ENCODE measurements at regions of chr9 and their contacts with region 1.

Region 1: DNA sequence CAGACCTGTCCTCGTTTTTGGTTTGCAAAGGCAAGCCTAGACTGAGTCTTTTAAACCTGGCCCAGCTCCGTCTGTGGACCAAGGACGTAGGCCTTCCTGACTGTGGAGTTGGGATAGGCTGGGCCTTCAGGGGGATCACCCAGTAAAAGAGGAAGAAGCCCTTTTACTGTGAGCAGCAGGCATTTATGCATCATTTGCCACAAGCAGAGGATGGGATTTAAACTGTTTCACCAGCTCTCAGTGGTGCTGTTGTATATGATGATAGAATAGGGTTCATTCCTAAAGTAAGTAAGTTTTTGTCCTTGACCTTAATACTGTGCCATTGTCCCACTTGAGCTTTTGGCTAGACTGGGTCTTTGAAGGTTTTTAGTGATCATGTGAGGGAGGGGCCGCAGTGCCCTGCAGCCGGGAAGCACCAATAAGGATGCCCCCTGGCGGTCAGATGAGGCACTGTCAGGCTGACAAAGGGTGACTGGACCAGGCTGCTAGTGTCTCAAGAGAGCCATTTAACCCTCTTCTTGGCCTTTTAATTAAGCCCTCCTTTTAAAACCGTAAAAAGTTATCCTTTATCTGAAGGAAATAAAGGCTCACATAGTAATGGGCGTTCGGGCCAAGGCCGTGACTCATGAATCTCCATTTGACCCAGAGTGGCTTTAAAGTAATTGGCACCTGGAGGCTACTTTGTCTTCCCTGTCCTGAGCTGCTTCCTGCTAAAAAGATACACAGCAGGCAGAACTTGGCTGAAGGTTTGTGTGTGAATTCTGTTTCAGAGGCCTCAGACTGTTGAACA is 74.0 kb downstream of the UBAP1 start:
- DNase-seq: peak; percentile 79
- ATAC-seq: peak; percentile 85
- H3K4me3 Mint-ChIP-seq: no peak overlapping the region
- H3K27ac Mint-ChIP-seq: no peak overlapping the region
- H3K4me1 Mint-ChIP-seq: peaks cover 12% of the 10 kb centered on the region
- H3K27me3 Mint-ChIP-seq: no peaks in the 10 kb centered on the region
- CTCF ChIP-seq: peak; percentile 95

Region 2: GRCh38 chr9:34065541-34065940 is 187.3 kb before region 1 on chr9:
- CTCF ChIA-PET with region 1: no interaction called
- POLR2A ChIA-PET with region 1: no interaction called
- intact Hi-C with region 1: no loop called
- DNase-seq: no peak
- ATAC-seq: no peak
- H3K4me3 Mint-ChIP-seq: no peak overlapping the region
- H3K27ac Mint-ChIP-seq: no peak overlapping the region
- H3K4me1 Mint-ChIP-seq: no peaks in the 10 kb centered on the region
- H3K27me3 Mint-ChIP-seq: no peaks in the 10 kb centered on the region
- CTCF ChIP-seq: no peak

Region 3: DNA sequence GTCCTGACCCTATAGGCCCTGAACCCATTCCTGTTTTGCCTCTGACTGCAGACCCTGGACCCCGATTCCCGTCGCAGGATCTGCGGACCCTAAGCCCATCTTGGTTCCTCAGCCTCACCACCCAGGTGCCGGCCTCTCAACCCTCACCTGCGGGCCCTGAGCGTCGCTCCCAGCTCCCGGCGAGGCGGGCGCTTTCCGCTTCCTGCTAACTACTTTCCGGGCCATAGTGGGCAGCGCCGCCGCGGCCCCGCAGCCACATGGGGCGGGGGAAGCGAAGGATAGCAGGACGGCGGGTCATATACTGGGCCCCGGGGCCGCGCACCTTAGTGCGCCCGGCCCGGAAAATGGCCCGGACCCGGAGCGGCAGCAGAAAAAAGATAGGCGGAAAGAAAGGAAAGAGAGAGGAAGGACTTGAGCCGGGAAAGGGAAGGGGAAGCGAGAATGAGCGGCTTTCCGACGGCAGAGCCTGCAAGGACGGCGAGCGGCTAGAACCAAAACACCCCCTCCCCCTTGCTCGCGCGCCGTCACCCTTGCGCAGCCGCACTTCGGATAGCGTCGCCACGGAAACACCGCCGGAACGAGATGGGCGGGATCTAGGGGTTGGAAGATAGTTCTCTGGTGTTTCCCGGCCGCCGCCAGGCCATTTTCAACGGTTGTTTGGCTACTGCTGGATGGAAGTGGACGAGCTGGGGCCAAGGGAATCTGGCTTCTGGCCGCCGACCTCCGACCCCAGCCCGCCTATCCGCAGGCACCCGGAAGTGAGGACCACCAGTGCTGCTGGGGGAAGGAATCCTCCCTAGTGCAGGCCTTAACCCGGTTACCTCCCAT is 126.4 kb before region 1 on chr9 and contains the start of gene DCAF12:
- CTCF ChIA-PET with region 1: interaction called, 4 read pairs
- POLR2A ChIA-PET with region 1: no interaction called
- intact Hi-C with region 1: loop called (anchors 10 kb)
- DNase-seq: peak; percentile 92
- ATAC-seq: peak; percentile 95
- H3K4me3 Mint-ChIP-seq: peak within 1 kb of the TSS; percentile 98
- H3K27ac Mint-ChIP-seq: peak within 1 kb of the TSS; percentile 97
- H3K4me1 Mint-ChIP-seq: peaks cover 37% of the 10 kb centered on the region
- H3K27me3 Mint-ChIP-seq: no peaks in the 10 kb centered on the region
- CTCF ChIP-seq: no peak
- total RNA-seq, gene DCAF12: 30.5 to 34.7 TPM

Region 4: DNA sequence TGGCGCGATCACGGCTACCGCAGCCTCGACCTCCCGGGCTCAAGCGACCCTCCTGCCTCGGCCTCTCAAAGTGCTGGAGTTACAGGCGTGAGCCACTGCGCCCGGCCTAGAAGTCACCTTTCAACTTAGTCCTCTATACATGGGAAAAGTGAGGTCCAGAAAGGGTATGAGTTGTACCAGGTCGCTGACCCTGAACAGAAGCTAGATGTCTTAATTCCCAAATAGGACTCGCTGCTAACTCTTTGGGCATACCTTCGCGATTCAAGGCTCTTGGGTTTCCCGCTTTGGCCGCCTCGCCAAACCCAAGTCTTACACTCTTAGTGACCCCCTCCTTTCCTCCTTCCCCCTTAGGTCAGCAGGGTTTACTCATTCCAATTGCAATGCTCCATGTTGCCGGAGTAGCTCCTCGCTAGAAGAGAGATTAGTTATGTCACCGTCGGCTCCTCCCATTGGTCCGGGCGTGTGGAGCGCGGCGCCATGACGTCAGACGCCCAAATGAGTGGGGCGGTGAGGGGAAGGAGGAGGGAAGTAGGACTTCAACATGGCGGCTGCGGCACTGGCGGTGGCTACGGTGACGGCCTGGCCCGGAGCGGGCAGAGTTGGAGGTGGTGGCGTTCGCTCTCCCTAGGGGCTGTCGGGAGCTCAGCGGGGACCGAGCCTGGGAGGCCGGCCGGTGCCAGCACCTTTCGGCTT is 74.2 kb before region 1 on chr9 and contains the start of gene UBAP1:
- CTCF ChIA-PET with region 1: interaction called, 10 read pairs
- POLR2A ChIA-PET with region 1: interaction called, 3 read pairs
- intact Hi-C with region 1: no loop called
- DNase-seq: peak; percentile 98
- ATAC-seq: peak; percentile 98
- H3K4me3 Mint-ChIP-seq: peak within 1 kb of the TSS; percentile 99
- H3K27ac Mint-ChIP-seq: peak within 1 kb of the TSS; percentile 98
- H3K4me1 Mint-ChIP-seq: peaks cover 11% of the 10 kb centered on the region
- H3K27me3 Mint-ChIP-seq: no peaks in the 10 kb centered on the region
- CTCF ChIP-seq: no peak
- total RNA-seq, gene UBAP1: 28.2 to 29.8 TPM

Region 5: GRCh38 chr9:34242830-34243229 is 10.0 kb before region 1 on chr9:
- CTCF ChIA-PET with region 1: interaction called, 53 read pairs
- POLR2A ChIA-PET with region 1: interaction called, 4 read pairs
- intact Hi-C with region 1: no loop called
- DNase-seq: no peak
- ATAC-seq: no peak
- H3K4me3 Mint-ChIP-seq: no peak overlapping the region
- H3K27ac Mint-ChIP-seq: no peak overlapping the region
- H3K4me1 Mint-ChIP-seq: peaks cover 25% of the 10 kb centered on the region
- H3K27me3 Mint-ChIP-seq: no peaks in the 10 kb centered on the region
- CTCF ChIP-seq: no peak

Region 6: DNA sequence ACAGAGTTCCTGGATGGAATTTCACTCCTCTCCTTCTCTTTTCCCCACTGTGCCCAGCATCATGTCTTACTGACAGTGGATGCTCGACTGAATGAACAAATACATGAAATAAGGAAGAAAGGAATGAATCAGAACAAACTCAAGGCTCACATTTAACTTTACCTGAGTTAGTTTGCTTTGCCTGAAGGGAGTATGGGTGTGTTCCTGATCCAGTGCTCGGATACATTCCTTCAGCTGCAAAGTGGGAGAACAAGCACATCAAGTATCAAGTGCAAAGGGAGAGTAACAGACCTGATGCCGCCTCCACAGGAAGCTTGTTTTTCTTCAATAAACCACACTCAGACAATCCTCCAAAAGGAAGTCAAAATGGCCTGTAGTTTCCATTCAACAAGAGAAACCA is 10.1 kb after region 1 on chr9:
- CTCF ChIA-PET with region 1: interaction called, 46 read pairs
- POLR2A ChIA-PET with region 1: no interaction called
- intact Hi-C with region 1: no loop called
- DNase-seq: no peak
- ATAC-seq: no peak
- H3K4me3 Mint-ChIP-seq: no peak overlapping the region
- H3K27ac Mint-ChIP-seq: no peak overlapping the region
- H3K4me1 Mint-ChIP-seq: peaks cover 8% of the 10 kb centered on the region
- H3K27me3 Mint-ChIP-seq: no peaks in the 10 kb centered on the region
- CTCF ChIP-seq: no peak

Region 7: DNA sequence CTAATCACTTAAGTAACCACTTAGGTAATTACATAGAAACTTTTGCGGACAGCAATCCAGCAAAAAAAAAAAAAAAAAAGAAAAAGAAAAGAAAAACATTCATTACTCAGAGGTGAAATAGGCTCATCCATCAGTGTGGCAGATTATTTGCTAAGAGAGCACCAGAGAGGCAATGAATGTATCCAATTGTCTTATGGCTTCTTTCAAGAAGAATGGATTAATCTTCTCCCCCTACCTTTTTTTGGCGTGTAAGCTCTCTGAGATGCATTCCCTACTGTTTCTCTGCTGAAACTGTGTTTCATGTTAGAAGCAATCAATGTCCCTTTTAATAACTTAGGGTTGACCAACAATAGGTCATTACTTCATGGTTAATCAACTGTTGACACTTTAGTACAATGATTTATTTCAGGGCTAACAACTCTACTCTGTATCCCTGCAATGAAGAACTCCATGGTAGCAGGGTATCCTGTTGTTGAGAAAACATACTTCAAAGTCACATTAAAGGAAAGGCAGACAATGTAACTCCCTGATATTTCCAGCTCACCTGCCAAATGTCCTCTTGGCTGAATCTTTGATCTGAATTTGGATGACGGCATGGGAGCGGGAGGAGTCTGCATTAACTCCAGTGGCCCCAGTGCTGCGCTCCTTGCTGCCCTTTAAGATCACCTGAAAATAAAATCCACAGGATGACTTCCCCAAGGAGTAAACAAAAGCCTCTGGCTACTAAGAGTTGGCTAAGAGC is 18.6 kb after region 1 on chr9:
- CTCF ChIA-PET with region 1: interaction called, 46 read pairs
- POLR2A ChIA-PET with region 1: no interaction called
- intact Hi-C with region 1: no loop called
- DNase-seq: no peak
- ATAC-seq: no peak
- H3K4me3 Mint-ChIP-seq: no peak overlapping the region
- H3K27ac Mint-ChIP-seq: no peak overlapping the region
- H3K4me1 Mint-ChIP-seq: no peaks in the 10 kb centered on the region
- H3K27me3 Mint-ChIP-seq: no peaks in the 10 kb centered on the region
- CTCF ChIP-seq: no peak

Region 8: DNA sequence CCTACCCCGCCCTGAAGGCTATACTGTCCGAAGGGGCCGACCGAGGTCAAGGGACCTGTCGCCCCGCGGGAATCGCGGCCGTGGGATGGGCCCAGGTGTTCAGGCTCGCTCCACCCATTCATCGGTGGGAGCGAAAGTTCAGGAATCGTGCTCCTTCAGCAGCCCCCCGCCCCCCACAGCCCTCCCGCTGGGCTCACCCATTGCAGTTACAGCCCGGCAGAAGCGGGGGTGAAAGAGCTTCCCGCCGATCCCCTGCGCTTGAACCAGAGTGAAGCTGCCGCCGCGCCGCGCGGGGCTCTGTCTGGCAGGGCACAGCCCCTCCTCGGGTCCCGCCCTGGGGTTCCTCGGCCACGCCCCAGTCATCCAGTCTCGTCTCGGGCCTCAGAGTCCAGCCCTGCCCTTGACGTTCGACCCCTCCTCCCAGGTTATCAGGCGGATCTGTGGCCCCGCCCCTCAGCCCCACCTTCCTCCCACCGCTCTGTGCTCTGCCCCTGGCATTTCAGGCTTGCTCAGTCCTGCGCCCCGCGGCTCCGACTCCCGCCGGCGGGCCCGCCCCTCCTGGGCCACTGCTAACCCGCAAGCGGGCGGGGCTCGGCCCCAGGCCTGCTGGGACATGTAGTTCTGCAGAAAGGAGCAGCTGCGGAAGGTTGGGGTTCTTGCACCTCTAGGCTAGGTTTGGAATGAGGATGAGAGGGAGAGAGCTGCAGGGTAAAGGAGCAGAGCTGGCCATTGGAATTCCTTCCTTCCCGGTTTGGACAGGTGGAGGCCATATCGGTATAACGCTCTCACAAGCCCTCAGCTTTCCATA is 123.9 kb after region 1 on chr9 and contains the start of gene MYORG:
- CTCF ChIA-PET with region 1: interaction called, 12 read pairs
- POLR2A ChIA-PET with region 1: no interaction called
- intact Hi-C with region 1: loop called (anchors 5 kb)
- DNase-seq: peak; percentile 99
- ATAC-seq: peak; percentile 86
- H3K4me3 Mint-ChIP-seq: peak within 1 kb of the TSS; percentile 87
- H3K27ac Mint-ChIP-seq: peak within 1 kb of the TSS; percentile 82
- H3K4me1 Mint-ChIP-seq: peaks cover 30% of the 10 kb centered on the region
- H3K27me3 Mint-ChIP-seq: no peaks in the 10 kb centered on the region
- CTCF ChIP-seq: no peak
- total RNA-seq, gene MYORG: 4.1 to 5.5 TPM

Region 9: GRCh38 chr9:34554211-34555001 is 301.5 kb after region 1 on chr9:
- CTCF ChIA-PET with region 1: no interaction called
- POLR2A ChIA-PET with region 1: no interaction called
- intact Hi-C with region 1: no loop called
- DNase-seq: no peak
- ATAC-seq: no peak
- H3K4me3 Mint-ChIP-seq: no peak overlapping the region
- H3K27ac Mint-ChIP-seq: no peak overlapping the region
- H3K4me1 Mint-ChIP-seq: no peaks in the 10 kb centered on the region
- H3K27me3 Mint-ChIP-seq: peaks cover 13% of the 10 kb centered on the region
- CTCF ChIP-seq: no peak